ENCODE measurements at regions of chr3 and their contacts with region 1.

Region 1: DNA sequence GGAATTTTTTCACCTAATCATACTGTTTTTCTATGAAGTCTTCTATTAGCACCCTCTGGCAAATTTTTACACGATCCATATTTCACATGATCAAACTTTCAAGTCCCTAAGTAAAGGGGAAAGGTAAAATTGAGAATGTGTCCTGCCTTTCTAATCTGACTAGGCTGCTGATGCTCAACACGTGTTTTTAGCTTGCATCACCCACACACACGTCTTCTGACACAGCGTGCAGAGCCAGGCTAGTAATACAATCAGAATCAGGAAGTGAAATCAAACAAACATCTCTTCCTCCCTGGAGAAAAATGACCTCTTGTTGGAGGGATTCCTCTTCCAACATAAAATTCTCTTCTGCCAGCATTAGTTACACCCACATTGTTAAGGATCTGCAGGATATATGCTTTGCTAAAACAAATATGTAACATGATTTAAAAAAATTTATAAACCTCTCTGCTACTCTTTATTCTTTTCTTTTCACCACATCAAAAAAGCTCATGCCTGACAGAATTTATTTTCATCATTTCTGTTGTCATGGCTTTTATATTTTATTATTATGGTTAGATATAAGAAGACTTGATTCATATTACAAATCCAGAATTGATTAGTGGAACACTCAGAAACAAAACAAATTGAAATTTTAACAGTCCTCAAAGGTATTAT is 122.4 kb downstream of the RAP2B start:
- DNase-seq: peak in 8 of 14 experiments; percentile 16 to 75 (median 40)
- ATAC-seq: peak; percentile 86
- H3K4me3 ChIP-seq: no peak overlapping the region
- H3K4me3 Mint-ChIP-seq: peak overlapping the region; percentile 43
- H3K27ac ChIP-seq: no peak overlapping the region
- H3K27ac Mint-ChIP-seq: peak overlapping the region; percentile 78
- H3K4me1 ChIP-seq: peaks cover 18% of the 10 kb centered on the region
- H3K4me1 Mint-ChIP-seq: peaks cover 46% of the 10 kb centered on the region
- H3K27me3 ChIP-seq: no peaks in the 10 kb centered on the region
- H3K27me3 Mint-ChIP-seq: no peaks in the 10 kb centered on the region
- CTCF ChIP-seq: no peak

Region 2: DNA sequence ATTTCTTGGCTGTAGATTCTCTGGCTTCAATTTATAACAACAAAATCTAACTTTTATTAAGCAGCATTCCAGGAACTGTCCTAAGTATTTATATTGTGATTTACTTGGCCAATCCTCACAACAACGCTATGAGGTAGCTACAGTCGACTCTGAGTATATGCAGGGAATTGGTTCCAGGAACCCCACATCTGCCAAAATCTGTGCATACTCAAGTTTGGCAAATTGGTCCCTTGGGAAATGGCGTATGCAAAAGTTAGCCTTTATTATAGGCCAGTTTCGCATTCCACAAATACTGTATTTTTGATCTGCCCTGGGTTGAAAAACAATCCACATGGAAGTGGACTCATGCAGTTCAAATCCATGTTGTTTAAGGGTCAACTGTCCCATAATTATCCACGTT is 68.4 kb before region 1 on chr3:
- CTCF ChIA-PET with region 1: no interaction called
- POLR2A ChIA-PET with region 1: no interaction called
- intact Hi-C with region 1: loop called (anchors 2 to 5 kb)
- DNase-seq: no peak
- ATAC-seq: no peak
- H3K4me3 ChIP-seq: no peak overlapping the region
- H3K4me3 Mint-ChIP-seq: no peak overlapping the region
- H3K27ac ChIP-seq: no peak overlapping the region
- H3K27ac Mint-ChIP-seq: no peak overlapping the region
- H3K4me1 ChIP-seq: peaks cover 21% of the 10 kb centered on the region
- H3K4me1 Mint-ChIP-seq: peaks cover 70% of the 10 kb centered on the region
- H3K27me3 ChIP-seq: no peaks in the 10 kb centered on the region
- H3K27me3 Mint-ChIP-seq: no peaks in the 10 kb centered on the region
- CTCF ChIP-seq: no peak

Region 3: DNA sequence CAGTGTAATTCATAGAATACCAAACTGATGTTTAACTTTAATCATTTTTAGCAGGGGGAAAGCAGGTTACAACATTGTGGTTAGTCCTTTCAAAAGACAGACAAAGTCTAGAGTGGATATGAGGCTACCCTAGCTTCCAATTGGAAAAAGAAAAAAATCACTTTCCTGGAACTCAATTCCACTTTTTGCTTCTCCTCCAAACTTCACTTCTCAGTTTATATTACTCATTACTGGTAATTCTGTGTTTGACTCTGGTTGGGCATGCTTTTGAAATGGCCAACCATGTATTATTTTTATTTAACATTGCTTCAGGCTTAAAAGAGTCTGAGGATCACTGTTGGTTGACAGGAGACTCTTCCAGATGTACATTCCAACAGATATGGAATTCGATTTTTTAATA is 37.6 kb before region 1 on chr3:
- CTCF ChIA-PET with region 1: no interaction called
- POLR2A ChIA-PET with region 1: no interaction called
- intact Hi-C with region 1: loop called in 1 of 2 experiments (anchors 5 kb)
- DNase-seq: no peak
- ATAC-seq: no peak
- H3K4me3 ChIP-seq: no peak overlapping the region
- H3K4me3 Mint-ChIP-seq: no peak overlapping the region
- H3K27ac ChIP-seq: no peak overlapping the region
- H3K27ac Mint-ChIP-seq: no peak overlapping the region
- H3K4me1 ChIP-seq: peaks cover 4% of the 10 kb centered on the region
- H3K4me1 Mint-ChIP-seq: peaks cover 47% of the 10 kb centered on the region
- H3K27me3 ChIP-seq: no peaks in the 10 kb centered on the region
- H3K27me3 Mint-ChIP-seq: no peaks in the 10 kb centered on the region
- CTCF ChIP-seq: no peak

Region 4: DNA sequence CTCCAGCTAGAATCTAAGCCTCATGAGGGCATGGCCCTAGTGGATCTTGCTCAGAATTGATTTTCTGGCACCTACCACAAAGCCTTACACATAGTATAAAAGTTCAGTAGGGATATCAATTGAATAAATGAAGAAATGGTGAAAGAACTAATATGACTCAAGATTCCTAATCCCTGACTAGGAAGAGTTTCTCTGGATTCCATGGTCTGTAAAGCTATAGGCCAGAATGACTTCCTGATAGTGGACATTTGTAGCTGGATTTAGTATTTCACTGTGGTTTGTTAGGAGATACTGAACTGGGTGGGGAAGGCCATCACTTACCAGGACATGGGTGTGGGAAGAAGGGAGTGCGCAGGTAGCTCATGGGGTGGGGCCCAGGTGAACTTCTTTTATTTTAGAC is 46.5 kb after region 1 on chr3:
- CTCF ChIA-PET with region 1: no interaction called
- POLR2A ChIA-PET with region 1: no interaction called
- intact Hi-C with region 1: no loop called
- DNase-seq: no peak
- ATAC-seq: no peak
- H3K4me3 ChIP-seq: no peak overlapping the region
- H3K4me3 Mint-ChIP-seq: no peak overlapping the region
- H3K27ac ChIP-seq: no peak overlapping the region
- H3K27ac Mint-ChIP-seq: no peak overlapping the region
- H3K4me1 ChIP-seq: no peaks in the 10 kb centered on the region
- H3K4me1 Mint-ChIP-seq: no peaks in the 10 kb centered on the region
- H3K27me3 ChIP-seq: no peaks in the 10 kb centered on the region
- H3K27me3 Mint-ChIP-seq: no peaks in the 10 kb centered on the region
- CTCF ChIP-seq: no peak

Measured in CD4-positive, alpha-beta T cell (primary cell).